CD4-positive, alpha-beta memory T cell (primary cell): ENCODE measurements at regions of chr11 and their contacts with region 1.

Region 1: GRCh38 chr11:65593518-65594298 is 1.9 kb downstream of the KCNK7 start:
- DNase-seq: peak in 4 of 5 donors; percentile 26 to 34 (median 28)
- H3K4me3 ChIP-seq: no peak overlapping the region
- H3K4me3 Mint-ChIP-seq: no peak overlapping the region
- H3K27ac ChIP-seq: no peak overlapping the region
- H3K27ac Mint-ChIP-seq: peak overlapping the region in 2 of 7 donors; percentile 10 to 42
- H3K4me1 ChIP-seq: peaks cover 30% of the 10 kb centered on the region
- H3K4me1 Mint-ChIP-seq: peaks cover 7 to 36% (median 12%) of the 10 kb centered on the region in 4 donors
- H3K27me3 ChIP-seq: no peaks in the 10 kb centered on the region
- H3K27me3 Mint-ChIP-seq: no peaks in the 10 kb centered on the region

Region 2: DNA sequence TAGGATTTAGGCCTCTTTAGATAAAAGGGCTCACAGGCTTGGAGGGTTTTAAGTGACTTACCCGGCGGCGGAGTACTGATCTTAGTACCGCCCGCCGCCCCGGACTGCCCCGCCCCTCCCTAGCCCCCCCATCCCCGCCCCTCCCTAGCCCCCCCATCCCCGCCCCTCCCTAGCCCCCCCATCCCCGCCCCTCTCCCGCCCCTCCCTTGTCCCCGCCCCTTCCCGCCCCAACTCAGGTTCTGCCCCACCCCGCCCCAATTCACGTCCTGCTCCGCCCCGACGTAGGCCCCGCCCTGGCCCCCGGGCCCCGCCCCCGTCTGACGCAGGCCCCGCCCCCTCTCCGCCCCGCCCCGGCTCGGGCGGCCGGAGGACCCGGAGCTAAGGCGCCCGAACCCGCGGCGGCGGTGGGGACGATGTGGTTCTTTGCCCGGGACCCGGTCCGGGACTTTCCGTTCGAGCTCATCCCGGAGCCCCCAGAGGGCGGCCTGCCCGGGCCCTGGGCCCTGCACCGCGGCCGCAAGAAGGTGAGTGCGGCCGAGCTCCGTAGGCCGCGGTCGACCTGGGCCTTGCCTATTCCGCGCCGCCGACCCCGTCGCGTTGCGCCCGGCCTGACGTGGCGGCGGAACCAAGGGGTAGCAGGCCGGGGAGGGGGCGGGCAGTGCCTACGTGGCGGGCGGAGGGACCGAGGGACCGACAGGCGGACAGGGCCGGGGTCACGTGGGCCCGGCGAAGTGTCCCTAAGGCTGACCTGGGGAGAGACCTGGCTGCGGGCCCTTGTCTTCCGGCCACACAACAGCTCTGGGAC is 68.8 kb before region 1 on chr11 and contains the start of gene SCYL1:
- CTCF ChIA-PET with region 1: interaction called, 11 read pairs
- POLR2A ChIA-PET with region 1: interaction called, 3 read pairs
- intact Hi-C with region 1: no loop called
- DNase-seq: peak; percentile 72 to 82 (median 75)
- H3K4me3 ChIP-seq: peak within 1 kb of the TSS; percentile 78 to 83
- H3K4me3 Mint-ChIP-seq: peak within 1 kb of the TSS; percentile 81 to 92 (median 88)
- H3K27ac ChIP-seq: peak within 1 kb of the TSS; percentile 84
- H3K27ac Mint-ChIP-seq: peak within 1 kb of the TSS; percentile 81 to 98 (median 94)
- H3K4me1 ChIP-seq: peaks cover 54% of the 10 kb centered on the region
- H3K4me1 Mint-ChIP-seq: peaks cover 35 to 63% (median 49%) of the 10 kb centered on the region in 4 donors
- H3K27me3 ChIP-seq: no peaks in the 10 kb centered on the region
- H3K27me3 Mint-ChIP-seq: no peaks in the 10 kb centered on the region
- total RNA-seq, gene SCYL1: 72.5 to 81.3 TPM

Region 3: DNA sequence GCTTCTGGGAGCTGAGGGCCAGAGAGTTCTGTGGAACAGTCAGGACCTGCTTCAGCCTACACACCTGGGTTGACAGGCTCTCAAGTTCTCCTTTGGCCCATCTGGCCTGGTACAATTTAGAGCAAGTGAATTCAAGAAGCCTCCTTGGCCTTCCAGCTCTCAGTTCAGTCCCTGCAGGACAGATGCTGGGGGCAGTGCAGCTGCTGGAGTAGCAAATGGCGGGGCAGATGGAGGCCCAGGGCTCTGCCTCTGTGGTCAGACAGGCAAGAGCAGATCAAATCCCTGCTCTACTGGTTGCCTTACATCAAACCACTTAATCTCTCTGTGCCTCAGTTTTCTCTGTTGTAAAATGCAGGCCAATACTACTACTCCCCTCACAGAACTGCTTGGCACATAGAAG is 10.6 kb after region 1 on chr11:
- CTCF ChIA-PET with region 1: interaction called, 22 read pairs
- POLR2A ChIA-PET with region 1: interaction called, 3 read pairs
- intact Hi-C with region 1: no loop called
- DNase-seq: no peak
- H3K4me3 ChIP-seq: no peak overlapping the region
- H3K4me3 Mint-ChIP-seq: no peak overlapping the region
- H3K27ac ChIP-seq: no peak overlapping the region
- H3K27ac Mint-ChIP-seq: peak overlapping the region in 1 of 7 donors; percentile 62
- H3K4me1 ChIP-seq: peaks cover 2% of the 10 kb centered on the region
- H3K4me1 Mint-ChIP-seq: peaks cover 6 to 13% (median 7%) of the 10 kb centered on the region in 4 donors
- H3K27me3 ChIP-seq: no peaks in the 10 kb centered on the region
- H3K27me3 Mint-ChIP-seq: no peaks in the 10 kb centered on the region

Region 4: DNA sequence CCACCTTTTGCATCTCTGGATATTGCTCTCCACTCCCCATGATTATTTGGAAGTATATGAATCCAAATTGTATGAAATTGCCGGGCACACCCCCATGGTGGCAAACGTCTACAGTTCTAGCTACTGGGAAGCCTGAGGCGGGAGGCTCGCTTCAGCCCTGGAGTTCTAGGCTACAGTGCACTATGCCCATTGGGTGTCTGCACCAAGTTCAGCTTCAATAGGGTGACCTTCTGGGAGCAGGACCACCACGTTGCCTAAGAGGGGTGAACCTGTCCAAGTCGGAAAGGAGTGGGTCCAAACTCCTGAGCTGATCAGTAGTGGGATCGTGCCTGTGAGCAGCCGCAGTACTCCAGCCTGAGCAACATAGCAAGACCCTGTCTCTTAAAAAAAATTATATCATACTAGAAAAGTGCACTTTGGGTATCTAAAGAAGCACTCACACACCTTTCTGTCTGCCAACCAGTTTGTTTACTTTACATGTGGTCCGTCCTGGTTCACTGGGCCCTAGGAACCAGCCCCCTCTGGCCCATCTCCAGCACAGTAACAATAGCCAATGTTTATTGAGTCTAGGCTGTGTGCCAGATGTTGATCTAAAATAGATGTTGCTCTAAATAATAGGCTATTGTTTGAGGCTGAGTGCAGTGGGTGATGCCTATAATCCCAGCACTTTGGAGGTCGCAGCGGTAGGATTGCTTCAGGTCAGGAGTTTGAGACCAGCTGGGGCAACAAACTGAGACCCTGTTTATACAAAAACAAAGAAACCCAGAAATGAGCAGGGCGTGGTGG is 101.9 kb after region 1 on chr11:
- CTCF ChIA-PET with region 1: no interaction called
- POLR2A ChIA-PET with region 1: no interaction called
- intact Hi-C with region 1: no loop called
- DNase-seq: no peak
- H3K4me3 ChIP-seq: no peak overlapping the region
- H3K4me3 Mint-ChIP-seq: no peak overlapping the region
- H3K27ac ChIP-seq: no peak overlapping the region
- H3K27ac Mint-ChIP-seq: no peak overlapping the region
- H3K4me1 ChIP-seq: no peaks in the 10 kb centered on the region
- H3K4me1 Mint-ChIP-seq: no peaks in the 10 kb centered on the region
- H3K27me3 ChIP-seq: no peaks in the 10 kb centered on the region
- H3K27me3 Mint-ChIP-seq: peaks cover 0 to 1% of the 10 kb centered on the region in 2 donors